ENCODE measurements at regions of chr1 and their contacts with region 1.

Region 1: DNA sequence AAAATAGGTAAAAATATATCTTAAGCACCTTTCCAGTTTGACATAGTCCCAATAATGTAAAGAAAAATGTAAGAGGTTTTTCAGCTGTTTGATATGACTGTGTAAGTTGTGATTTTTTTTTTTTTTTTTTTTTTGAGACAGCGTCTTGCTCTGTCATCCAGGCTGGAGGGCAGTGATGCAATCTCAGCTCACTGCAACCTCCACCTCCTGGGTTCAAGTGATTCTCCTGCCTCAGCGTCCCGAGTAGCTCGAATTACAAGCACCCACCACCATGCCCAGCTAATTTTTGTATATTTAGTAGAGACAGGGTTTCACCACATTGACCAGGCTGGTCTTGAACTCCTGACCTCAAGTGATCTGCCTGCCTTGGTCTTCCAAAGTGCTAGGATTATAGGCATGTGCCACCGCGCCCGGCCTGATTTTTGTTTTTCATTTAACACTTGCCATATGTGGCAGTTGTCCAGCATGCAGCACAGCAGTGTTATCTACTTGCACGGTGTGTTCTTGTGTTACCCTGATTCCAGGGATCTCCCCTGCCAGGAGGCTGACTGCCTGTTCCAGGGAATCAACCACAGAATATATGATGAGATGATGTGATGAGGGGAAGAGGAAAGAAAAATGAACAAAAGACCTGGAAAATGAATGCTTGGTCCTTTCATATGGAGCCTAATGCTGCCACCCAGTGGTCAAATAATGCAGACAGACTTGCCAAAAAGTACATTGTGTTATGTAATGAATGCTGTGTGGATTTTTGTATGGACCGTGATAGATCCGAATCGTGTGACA is 79.0 kb downstream of the RAVER2 start:
- DNase-seq: peak; percentile 81
- H3K4me3 ChIP-seq: no peak overlapping the region
- H3K27ac ChIP-seq: no peak overlapping the region
- H3K4me1 ChIP-seq: peaks cover 2% of the 10 kb centered on the region
- H3K27me3 ChIP-seq: no peaks in the 10 kb centered on the region
- CTCF ChIP-seq: peak; percentile 61 to 69
- POLR2A ChIP-seq: no peak

Region 2: GRCh38 chr1:64387389-64388285 is 436.2 kb before region 1 on chr1:
- CTCF ChIA-PET with region 1: no interaction called
- POLR2A ChIA-PET with region 1: no interaction called
- dilution Hi-C with region 1: no loop called
- intact Hi-C with region 1: loop called (anchors 10 kb)
- DNase-seq: peak; percentile 10
- H3K4me3 ChIP-seq: no peak overlapping the region
- H3K27ac ChIP-seq: no peak overlapping the region
- H3K4me1 ChIP-seq: no peaks in the 10 kb centered on the region
- H3K27me3 ChIP-seq: no peaks in the 10 kb centered on the region
- CTCF ChIP-seq: no peak
- POLR2A ChIP-seq: no peak

Region 3: GRCh38 chr1:64686828-64687724 is 136.8 kb before region 1 on chr1:
- CTCF ChIA-PET with region 1: interaction called, 14 read pairs
- POLR2A ChIA-PET with region 1: no interaction called
- dilution Hi-C with region 1: no loop called
- intact Hi-C with region 1: loop called (anchors 1 kb)
- DNase-seq: peak; percentile 88
- H3K4me3 ChIP-seq: peak overlapping the region in 1 of 3 experiments; percentile 22
- H3K27ac ChIP-seq: peak overlapping the region; percentile 95
- H3K4me1 ChIP-seq: peaks cover 31% of the 10 kb centered on the region
- H3K27me3 ChIP-seq: no peaks in the 10 kb centered on the region
- CTCF ChIP-seq: peak; percentile 67 to 73
- POLR2A ChIP-seq: no peak

Region 4: DNA sequence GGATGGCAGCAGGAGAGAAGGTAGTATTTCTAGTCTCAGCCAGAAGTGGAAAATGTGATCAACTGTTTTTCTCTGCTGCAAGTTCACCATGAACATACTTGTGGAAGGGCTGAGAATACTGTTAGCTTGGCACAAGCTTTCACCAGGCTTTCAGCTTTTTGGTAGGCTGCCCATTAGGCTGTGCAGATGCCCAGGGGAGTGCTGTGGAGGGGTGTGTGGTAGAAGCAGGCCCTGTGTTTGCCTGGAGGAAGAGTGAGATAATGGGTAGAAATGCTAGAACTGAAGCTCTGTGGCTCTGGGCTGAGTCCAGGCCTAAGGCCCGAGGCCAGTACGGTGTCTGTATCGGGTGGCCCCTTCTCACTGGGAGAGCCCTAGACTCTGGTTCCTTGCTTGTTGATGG is 495.3 kb after region 1 on chr1:
- CTCF ChIA-PET with region 1: no interaction called
- POLR2A ChIA-PET with region 1: no interaction called
- dilution Hi-C with region 1: no loop called
- intact Hi-C with region 1: no loop called
- DNase-seq: no peak
- H3K4me3 ChIP-seq: no peak overlapping the region
- H3K27ac ChIP-seq: no peak overlapping the region
- H3K4me1 ChIP-seq: no peaks in the 10 kb centered on the region
- H3K27me3 ChIP-seq: no peaks in the 10 kb centered on the region
- CTCF ChIP-seq: no peak
- POLR2A ChIP-seq: no peak

Measured in endothelial cell of umbilical vein (primary cell).